Mammary epithelial cell (primary cell): ENCODE measurements at regions of chr5 and their contacts with region 1.

Region 1: DNA sequence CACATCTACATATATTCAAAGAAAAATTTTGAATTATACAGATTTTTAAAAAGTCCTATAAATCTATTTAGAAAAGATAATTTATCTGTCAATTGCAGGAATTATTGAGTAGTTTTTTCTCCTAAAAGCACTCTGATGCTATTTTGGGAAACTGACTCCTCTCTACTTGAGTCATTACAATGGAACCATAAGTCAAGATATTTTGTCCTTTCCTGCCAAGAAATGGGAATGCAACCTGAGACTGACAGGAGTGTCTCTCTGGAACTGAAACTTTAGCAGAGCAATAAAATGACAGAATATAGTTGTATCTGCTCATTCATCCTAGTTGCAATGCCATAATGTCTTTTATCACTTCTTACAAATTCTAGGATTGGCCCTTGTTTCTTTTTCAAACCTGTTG is 48.6 kb downstream of the CARTPT start:
- DNase-seq: no peak
- H3K4me3 ChIP-seq: no peak overlapping the region
- H3K27ac ChIP-seq: no peak overlapping the region
- H3K4me1 ChIP-seq: no peaks in the 10 kb centered on the region
- H3K27me3 ChIP-seq: no peaks in the 10 kb centered on the region
- CTCF ChIP-seq: no peak

Region 2: GRCh38 chr5:71703941-71704340 is 63.7 kb before region 1 on chr5:
- CTCF ChIA-PET with region 1: no interaction called
- dilution Hi-C with region 1: loop called (anchors 10 kb)
- in situ Hi-C with region 1: no loop called
- intact Hi-C with region 1: no loop called
- DNase-seq: no peak
- H3K4me3 ChIP-seq: no peak overlapping the region
- H3K27ac ChIP-seq: no peak overlapping the region
- H3K4me1 ChIP-seq: no peaks in the 10 kb centered on the region
- H3K27me3 ChIP-seq: peaks cover 12% of the 10 kb centered on the region
- CTCF ChIP-seq: no peak

Region 3: GRCh38 chr5:71727978-71728377 is 39.7 kb before region 1 on chr5:
- CTCF ChIA-PET with region 1: no interaction called
- dilution Hi-C with region 1: loop called (anchors 5 kb)
- in situ Hi-C with region 1: no loop called
- intact Hi-C with region 1: no loop called
- DNase-seq: no peak
- H3K4me3 ChIP-seq: no peak overlapping the region
- H3K27ac ChIP-seq: no peak overlapping the region
- H3K4me1 ChIP-seq: no peaks in the 10 kb centered on the region
- H3K27me3 ChIP-seq: peaks cover 7% of the 10 kb centered on the region
- CTCF ChIP-seq: no peak

Region 4: DNA sequence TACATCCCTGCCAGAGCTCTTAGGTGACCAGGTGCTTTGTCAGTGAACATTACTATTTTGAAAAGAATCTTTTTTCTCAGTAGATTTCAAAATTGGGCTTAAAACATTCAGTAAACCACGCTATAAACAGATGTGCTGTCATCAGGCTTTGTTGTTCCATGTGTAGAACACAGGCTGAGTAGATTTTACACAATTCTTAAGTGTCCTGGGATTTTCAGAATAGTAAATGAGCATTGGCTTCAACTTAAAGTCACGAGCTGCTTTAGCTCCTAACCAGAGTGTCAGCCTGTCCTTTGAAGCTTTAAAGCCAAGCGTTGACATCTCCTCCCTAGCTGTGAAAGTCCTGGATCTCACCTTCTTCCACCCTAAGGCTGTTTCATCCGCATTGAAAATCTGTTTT is 35.0 kb after region 1 on chr5:
- CTCF ChIA-PET with region 1: no interaction called
- dilution Hi-C with region 1: loop called (anchors 5 kb)
- in situ Hi-C with region 1: no loop called
- intact Hi-C with region 1: no loop called
- DNase-seq: no peak
- H3K4me3 ChIP-seq: no peak overlapping the region
- H3K27ac ChIP-seq: no peak overlapping the region
- H3K4me1 ChIP-seq: no peaks in the 10 kb centered on the region
- H3K27me3 ChIP-seq: peaks cover 11% of the 10 kb centered on the region
- CTCF ChIP-seq: no peak